Activated CD4-positive, alpha-beta T cell treated with anti-CD3 and anti-CD28 coated beads for 36 hours (primary cell): ENCODE measurements at regions of chr5 and their contacts with region 1.

Region 1: GRCh38 chr5:112848116-112848811 is 12.8 kb upstream of the SRP19 start:
- DNase-seq: peak; percentile 17
- ATAC-seq: peak; percentile 100
- H3K4me3 Mint-ChIP-seq: no peak overlapping the region
- H3K27ac Mint-ChIP-seq: peak overlapping the region; percentile 81
- H3K4me1 Mint-ChIP-seq: peaks cover 4% of the 10 kb centered on the region
- H3K27me3 Mint-ChIP-seq: no peaks in the 10 kb centered on the region

Region 2: DNA sequence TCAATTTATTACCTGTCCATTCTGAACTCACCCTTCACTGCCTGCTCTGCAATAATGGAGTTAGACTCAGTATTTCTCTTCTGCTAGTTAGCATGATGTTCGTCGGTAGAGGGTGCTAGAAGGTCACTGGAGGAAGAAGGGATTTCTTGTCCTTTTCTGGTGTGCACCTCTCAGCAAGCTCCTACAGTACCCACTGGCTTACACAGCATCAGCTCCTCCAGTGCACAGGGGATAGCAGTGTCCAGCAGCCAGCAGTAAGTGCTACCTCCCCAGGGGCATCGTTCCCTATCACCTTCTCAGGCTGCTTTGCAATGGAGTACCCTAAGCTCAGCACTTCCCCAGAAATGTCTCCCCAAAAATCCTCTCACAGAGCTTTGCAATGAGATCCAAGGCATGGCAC is 156.5 kb before region 1 on chr5:
- CTCF ChIA-PET with region 1: interaction called, 6 read pairs
- POLR2A ChIA-PET with region 1: no interaction called
- intact Hi-C with region 1: loop called in 1 of 2 experiments (anchors 2 kb)
- DNase-seq: peak; percentile 52
- ATAC-seq: peak; percentile 68
- H3K4me3 Mint-ChIP-seq: no peak overlapping the region
- H3K27ac Mint-ChIP-seq: no peak overlapping the region
- H3K4me1 Mint-ChIP-seq: no peaks in the 10 kb centered on the region
- H3K27me3 Mint-ChIP-seq: peaks cover 29% of the 10 kb centered on the region

Region 3: DNA sequence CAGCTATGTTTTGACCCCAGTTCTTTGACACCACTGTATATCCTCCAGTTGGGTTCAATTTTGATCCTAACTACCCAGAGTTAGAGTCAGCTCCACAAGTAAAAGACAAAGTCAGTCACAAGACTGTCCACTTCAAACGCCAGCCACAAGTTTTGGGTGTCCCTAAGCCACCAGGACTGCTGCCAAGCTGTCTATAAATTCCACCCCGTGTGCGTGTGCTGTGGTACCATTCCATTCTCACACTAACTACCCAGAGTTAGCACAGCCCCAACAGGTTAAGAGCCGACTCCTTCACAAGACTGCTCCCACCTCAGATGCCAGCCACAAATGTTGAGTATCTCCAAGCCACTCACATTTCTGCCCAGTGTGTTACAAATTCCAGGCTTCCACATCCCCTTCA is 53.9 kb before region 1 on chr5:
- CTCF ChIA-PET with region 1: no interaction called
- POLR2A ChIA-PET with region 1: interaction called, 11 read pairs
- intact Hi-C with region 1: no loop called
- DNase-seq: no peak
- ATAC-seq: no peak
- H3K4me3 Mint-ChIP-seq: no peak overlapping the region
- H3K27ac Mint-ChIP-seq: no peak overlapping the region
- H3K4me1 Mint-ChIP-seq: no peaks in the 10 kb centered on the region
- H3K27me3 Mint-ChIP-seq: no peaks in the 10 kb centered on the region